ENCODE measurements at regions of chr3 and their contacts with region 1.

Region 1: GRCh38 chr3:62558549-62559112 is 185.3 kb upstream of the FEZF2 start:
- DNase-seq: peak; percentile 13
- ATAC-seq: peak; percentile 63; the same call in 1 of the 2 replicates
- H3K4me3 ChIP-seq: no peak overlapping the region
- H3K27ac ChIP-seq: no peak overlapping the region
- H3K4me1 ChIP-seq: peaks cover 2% of the 10 kb centered on the region; the same call in 1 of the 2 replicates
- H3K27me3 ChIP-seq: peaks cover 2% of the 10 kb centered on the region
- CTCF ChIP-seq: peak; percentile 50
- POLR2A ChIP-seq: no peak
- RAD21 ChIP-seq: peak; percentile 33

Region 2: DNA sequence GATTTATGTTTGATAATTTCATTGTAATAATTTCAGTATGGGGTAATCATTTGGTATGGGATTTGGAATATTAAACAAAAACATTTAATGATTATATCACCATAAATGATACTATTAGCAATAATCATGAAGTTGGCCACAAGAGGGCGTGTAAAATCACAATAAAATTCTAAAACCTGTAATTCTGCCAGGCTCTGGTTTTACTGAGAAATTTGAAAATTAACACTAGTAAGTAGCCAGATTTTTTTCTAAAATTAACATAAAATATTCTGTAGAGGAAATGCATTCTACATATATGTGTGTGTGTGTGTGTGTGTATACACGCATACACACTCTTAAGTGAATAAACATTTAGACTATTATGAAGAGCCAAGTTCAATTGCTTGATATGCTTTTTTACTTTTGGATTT is 225.8 kb before region 1 on chr3:
- CTCF ChIA-PET with region 1: interaction called, 4 read pairs
- POLR2A ChIA-PET with region 1: no interaction called
- dilution Hi-C with region 1: no loop called
- in situ Hi-C with region 1: loop called (anchors 5 kb)
- intact Hi-C with region 1: loop called (anchors 1 kb)
- DNase-seq: peak; percentile 23
- ATAC-seq: no peak
- H3K4me3 ChIP-seq: no peak overlapping the region
- H3K27ac ChIP-seq: no peak overlapping the region
- H3K4me1 ChIP-seq: no peaks in the 10 kb centered on the region
- H3K27me3 ChIP-seq: no peaks in the 10 kb centered on the region
- CTCF ChIP-seq: peak; percentile 54
- POLR2A ChIP-seq: no peak
- RAD21 ChIP-seq: 0 out of 2 replicates have a peak, but pooled peaks have one; percentile 12

Measured in IMR-90 (cell line).